ENCODE measurements at regions of chr15 and their contacts with region 1.

Region 1: GRCh38 chr15:68277603-68278344 is at the start of gene FEM1B:
- DNase-seq: peak; percentile 68
- ATAC-seq: peak; percentile 88
- H3K4me3 ChIP-seq: peak within 1 kb of the TSS; percentile 98
- H3K27ac ChIP-seq: peak within 1 kb of the TSS; percentile 91
- H3K4me1 ChIP-seq: peaks cover 5% of the 10 kb centered on the region
- H3K27me3 ChIP-seq: no peaks in the 10 kb centered on the region
- CTCF ChIP-seq: peak in 1 of 3 experiments; percentile 50; a peak in 2 of 6 replicates
- EP300 ChIP-seq: 0 out of 4 replicates have a peak, but pooled peaks of 1 of the 2 experiments have one; percentile 31
- POLR2A ChIP-seq: peak; percentile 90
- RAD21 ChIP-seq: no peak; the same call in 1 of the 2 replicates
- polyA plus RNA-seq, gene FEM1B: 5.5 to 5.7 TPM

Region 2: DNA sequence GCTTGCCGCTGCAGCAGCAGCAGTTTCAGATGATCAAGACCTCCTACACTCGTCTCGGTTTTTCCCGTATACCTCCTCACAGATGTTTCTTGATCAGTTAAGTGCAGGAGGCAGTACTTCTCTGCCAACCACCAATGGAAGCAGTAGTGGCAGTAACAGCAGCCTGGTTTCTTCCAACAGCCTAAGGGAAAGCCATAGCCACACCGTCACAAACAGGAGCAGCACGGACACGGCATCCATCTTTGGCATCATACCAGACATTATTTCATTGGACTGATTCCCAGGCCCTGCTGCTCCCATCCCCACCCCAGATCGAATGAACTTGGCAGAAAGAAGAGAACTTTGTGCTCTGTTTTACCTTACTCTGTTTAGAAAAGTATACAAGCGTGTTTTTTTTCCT is 90.2 kb before region 1 on chr15:
- CTCF ChIA-PET with region 1: no interaction called
- POLR2A ChIA-PET with region 1: no interaction called
- RAD21 ChIA-PET with region 1: no interaction called
- SMC1A ChIA-PET with region 1: no interaction called
- in situ Hi-C with region 1: no loop called
- intact Hi-C with region 1: no loop called
- DNase-seq: no peak
- ATAC-seq: no peak; the same call in 2 of the 3 replicates
- H3K4me3 ChIP-seq: no peak overlapping the region
- H3K27ac ChIP-seq: no peak overlapping the region
- H3K4me1 ChIP-seq: peaks cover 17% of the 10 kb centered on the region
- H3K27me3 ChIP-seq: no peaks in the 10 kb centered on the region
- CTCF ChIP-seq: no peak
- EP300 ChIP-seq: no peak
- POLR2A ChIP-seq: no peak
- RAD21 ChIP-seq: no peak

Region 3: DNA sequence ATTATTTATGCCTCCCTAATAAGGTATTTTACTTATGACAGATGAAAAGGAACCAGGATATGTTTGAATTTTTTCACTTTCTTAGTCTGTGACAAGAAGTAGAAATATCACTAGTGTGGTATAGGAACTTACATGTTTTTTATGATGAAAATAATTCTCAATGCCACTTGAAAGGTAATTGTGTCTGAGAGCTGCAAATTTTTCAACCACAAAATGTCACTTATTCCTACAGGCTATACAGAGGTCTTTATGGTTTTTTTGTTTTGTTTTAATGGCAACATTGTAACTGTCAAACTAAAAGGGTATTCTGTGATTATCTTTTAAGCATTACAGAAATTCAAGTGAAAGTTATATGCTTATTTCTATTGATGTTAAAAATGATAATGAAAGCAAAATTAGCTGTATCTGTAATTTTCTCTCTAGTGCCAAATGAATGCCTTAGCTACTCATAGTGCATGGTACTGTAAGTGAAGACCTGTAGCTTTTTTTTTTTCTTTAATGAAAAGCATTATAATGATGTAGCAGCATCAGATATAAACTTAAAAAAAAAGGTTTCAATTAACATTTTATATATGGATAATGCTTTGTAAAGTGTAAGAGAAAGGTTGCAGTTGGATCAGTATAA is 14.5 kb after region 1 on chr15:
- CTCF ChIA-PET with region 1: interaction called, 14 read pairs
- POLR2A ChIA-PET with region 1: interaction called, 4 read pairs
- RAD21 ChIA-PET with region 1: interaction called, 5 read pairs
- SMC1A ChIA-PET with region 1: interaction called, 20 read pairs
- in situ Hi-C with region 1: no loop called
- intact Hi-C with region 1: no loop called
- DNase-seq: no peak
- ATAC-seq: peak; percentile 34; the same call in 2 of the 3 replicates
- H3K4me3 ChIP-seq: no peak overlapping the region
- H3K27ac ChIP-seq: no peak overlapping the region
- H3K4me1 ChIP-seq: no peaks in the 10 kb centered on the region
- H3K27me3 ChIP-seq: no peaks in the 10 kb centered on the region
- CTCF ChIP-seq: no peak
- EP300 ChIP-seq: no peak
- POLR2A ChIP-seq: no peak
- RAD21 ChIP-seq: no peak

Region 4: GRCh38 chr15:68298882-68299381 is 21.2 kb after region 1 on chr15:
- CTCF ChIA-PET with region 1: interaction called, 6 read pairs
- POLR2A ChIA-PET with region 1: interaction called, 7 read pairs
- RAD21 ChIA-PET with region 1: interaction called, 8 read pairs
- SMC1A ChIA-PET with region 1: interaction called, 20 read pairs
- in situ Hi-C with region 1: no loop called
- intact Hi-C with region 1: loop called (anchors 1 kb)
- DNase-seq: peak; percentile 77
- ATAC-seq: peak; percentile 96
- H3K4me3 ChIP-seq: peak overlapping the region; percentile 23; the same call in 1 of the 2 replicates
- H3K27ac ChIP-seq: peak overlapping the region; percentile 84
- H3K4me1 ChIP-seq: peaks cover 27% of the 10 kb centered on the region
- H3K27me3 ChIP-seq: no peaks in the 10 kb centered on the region
- CTCF ChIP-seq: no peak
- EP300 ChIP-seq: 0 out of 4 replicates have a peak, but pooled peaks of 1 of the 2 experiments have one; percentile 21
- POLR2A ChIP-seq: no peak; the same call in 1 of the 2 replicates
- RAD21 ChIP-seq: no peak